ENCODE measurements at regions of chr9 and their contacts with region 1.

Region 1: GRCh38 chr9:128159784-128160602 is at the start of gene BBLN:
- DNase-seq: peak; percentile 99

Region 2: DNA sequence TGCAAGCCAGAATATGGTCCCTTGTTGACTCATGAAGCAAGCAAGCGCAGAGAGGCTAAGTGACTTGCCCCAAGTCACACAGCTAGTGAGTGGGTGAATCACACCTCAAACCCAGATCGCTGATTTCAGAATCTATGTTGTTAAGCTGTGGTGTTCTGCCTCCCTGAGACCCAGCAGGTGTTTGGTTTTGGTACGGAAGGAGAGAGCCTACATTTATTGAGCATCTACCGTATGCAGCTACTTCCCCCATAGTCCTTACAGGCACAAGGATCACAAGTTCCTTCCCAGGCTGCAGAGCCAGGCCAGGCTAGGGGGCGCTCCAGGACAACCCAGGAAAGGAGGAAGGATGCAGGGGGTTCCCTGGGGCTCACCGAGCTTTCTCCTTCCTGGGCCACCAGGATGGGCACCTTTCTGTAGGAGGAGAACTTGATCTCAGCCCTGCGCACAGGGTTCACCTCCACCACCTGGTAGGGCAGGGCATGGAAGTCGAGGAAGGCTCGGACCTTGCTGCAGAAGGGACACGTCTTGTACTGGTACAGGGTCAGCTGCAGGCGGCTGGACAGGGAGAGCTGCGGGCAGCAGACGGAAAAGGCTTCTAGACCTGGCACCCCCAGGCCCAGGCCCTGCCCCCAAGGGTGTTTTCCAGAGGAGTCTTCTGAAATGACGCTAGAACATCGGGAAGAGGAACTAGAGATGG is 35.0 kb before region 1 on chr9:
- CTCF ChIA-PET with region 1: interaction called, 3 read pairs
- POLR2A ChIA-PET with region 1: interaction called, 10 read pairs
- DNase-seq: peak; percentile 55

Region 3: GRCh38 chr9:128145536-128145935 is 14.5 kb before region 1 on chr9:
- CTCF ChIA-PET with region 1: interaction called, 4 read pairs
- POLR2A ChIA-PET with region 1: interaction called, 15 read pairs
- DNase-seq: no peak